ENCODE measurements at regions of chr11 and their contacts with region 1.

Region 1: DNA sequence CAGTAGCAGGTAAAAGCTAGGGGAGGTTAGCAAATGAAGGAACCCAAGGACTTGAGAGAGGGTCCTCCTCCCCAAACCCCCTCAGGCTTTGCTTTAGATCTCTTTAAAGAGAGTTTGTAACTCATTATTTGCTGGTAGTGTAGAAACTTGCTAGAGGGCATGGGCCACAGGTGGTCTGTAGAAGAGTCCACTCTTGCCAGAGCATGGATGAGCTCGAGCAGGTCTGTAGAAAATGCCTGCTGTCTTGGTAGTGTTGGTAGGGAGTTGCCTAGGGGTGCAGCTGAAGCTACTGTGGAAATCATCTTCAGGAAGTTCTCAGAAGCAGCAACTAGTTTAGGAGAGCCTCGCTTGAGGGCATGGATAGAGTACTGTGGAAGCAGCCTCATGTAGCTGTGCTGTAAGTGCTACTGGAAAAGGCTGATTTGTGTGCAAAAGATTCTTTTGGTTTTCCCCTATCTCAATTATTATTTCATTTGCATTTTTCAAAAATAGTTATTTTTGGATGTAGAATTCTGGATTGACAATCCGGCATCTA is 104.3 kb downstream of the TMEM135 start:
- DNase-seq: no peak
- H3K4me3 ChIP-seq: no peak overlapping the region
- H3K4me3 Mint-ChIP-seq: no peak overlapping the region
- H3K27ac Mint-ChIP-seq: no peak overlapping the region
- H3K4me1 ChIP-seq: no peaks in the 10 kb centered on the region; the same call in 1 of the 2 replicates
- H3K4me1 Mint-ChIP-seq: no peaks in the 10 kb centered on the region
- H3K27me3 ChIP-seq: no peaks in the 10 kb centered on the region
- H3K27me3 Mint-ChIP-seq: no peaks in the 10 kb centered on the region
- CTCF ChIP-seq: no peak

Region 2: GRCh38 chr11:87125257-87125656 is 16.8 kb before region 1 on chr11:
- CTCF ChIA-PET with region 1: no interaction called
- POLR2A ChIA-PET with region 1: no interaction called
- intact Hi-C with region 1: loop called (anchors 2 kb)
- DNase-seq: no peak
- H3K4me3 ChIP-seq: no peak overlapping the region
- H3K4me3 Mint-ChIP-seq: no peak overlapping the region
- H3K27ac Mint-ChIP-seq: no peak overlapping the region
- H3K4me1 ChIP-seq: peaks cover 12% of the 10 kb centered on the region
- H3K4me1 Mint-ChIP-seq: peaks cover 15% of the 10 kb centered on the region
- H3K27me3 ChIP-seq: no peaks in the 10 kb centered on the region
- H3K27me3 Mint-ChIP-seq: no peaks in the 10 kb centered on the region
- CTCF ChIP-seq: no peak

Region 3: GRCh38 chr11:87173185-87174039 is 31.4 kb after region 1 on chr11:
- CTCF ChIA-PET with region 1: no interaction called
- POLR2A ChIA-PET with region 1: no interaction called
- intact Hi-C with region 1: no loop called
- DNase-seq: no peak
- H3K4me3 ChIP-seq: no peak overlapping the region
- H3K4me3 Mint-ChIP-seq: no peak overlapping the region
- H3K27ac Mint-ChIP-seq: no peak overlapping the region
- H3K4me1 ChIP-seq: peaks cover 6% of the 10 kb centered on the region
- H3K4me1 Mint-ChIP-seq: peaks cover 19% of the 10 kb centered on the region
- H3K27me3 ChIP-seq: no peaks in the 10 kb centered on the region
- H3K27me3 Mint-ChIP-seq: no peaks in the 10 kb centered on the region
- CTCF ChIP-seq: no peak

Region 4: GRCh38 chr11:87203907-87204602 is 62.0 kb after region 1 on chr11:
- CTCF ChIA-PET with region 1: no interaction called
- POLR2A ChIA-PET with region 1: no interaction called
- intact Hi-C with region 1: no loop called
- DNase-seq: no peak
- H3K4me3 ChIP-seq: no peak overlapping the region
- H3K4me3 Mint-ChIP-seq: no peak overlapping the region
- H3K27ac Mint-ChIP-seq: peak overlapping the region; percentile 67
- H3K4me1 ChIP-seq: peaks cover 12% of the 10 kb centered on the region
- H3K4me1 Mint-ChIP-seq: peaks cover 13% of the 10 kb centered on the region
- H3K27me3 ChIP-seq: no peaks in the 10 kb centered on the region
- H3K27me3 Mint-ChIP-seq: no peaks in the 10 kb centered on the region
- CTCF ChIP-seq: no peak

Measured in Caco-2 (cell line).